ENCODE measurements at regions of chr1 and their contacts with region 1.

Region 1: GRCh38 chr1:116570358-116571200 is at the start of gene CD58:
- DNase-seq: peak; percentile 88 to 93
- H3K4me3 ChIP-seq: peak within 1 kb of the TSS; percentile 79
- H3K4me1 ChIP-seq: peaks cover 9% of the 10 kb centered on the region
- H3K27me3 ChIP-seq: no peaks in the 10 kb centered on the region

Region 2: DNA sequence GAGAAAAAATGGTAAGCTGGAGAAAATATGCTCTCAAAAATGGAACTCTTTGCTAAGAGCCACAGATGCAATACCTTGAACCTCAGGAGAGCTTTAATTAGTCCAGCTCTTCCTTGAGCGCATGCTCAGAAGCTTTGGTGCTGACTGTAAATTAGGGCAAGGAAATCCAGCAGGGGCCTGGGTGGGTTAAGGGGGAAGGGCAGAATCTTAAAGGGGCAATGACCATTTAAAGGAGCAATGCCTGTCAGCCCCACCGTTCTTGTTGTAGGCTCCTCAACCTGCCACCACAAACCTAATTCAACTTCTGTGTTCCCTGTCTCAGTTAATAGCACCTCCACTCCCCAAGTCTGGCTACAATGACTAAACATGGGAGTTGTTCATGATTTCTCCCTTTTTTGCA is 601.1 kb before region 1 on chr1:
- in situ Hi-C with region 1: no loop called
- DNase-seq: peak; percentile 74 to 79
- H3K4me3 ChIP-seq: no peak overlapping the region
- H3K4me1 ChIP-seq: peaks cover 8% of the 10 kb centered on the region
- H3K27me3 ChIP-seq: no peaks in the 10 kb centered on the region

Region 3: DNA sequence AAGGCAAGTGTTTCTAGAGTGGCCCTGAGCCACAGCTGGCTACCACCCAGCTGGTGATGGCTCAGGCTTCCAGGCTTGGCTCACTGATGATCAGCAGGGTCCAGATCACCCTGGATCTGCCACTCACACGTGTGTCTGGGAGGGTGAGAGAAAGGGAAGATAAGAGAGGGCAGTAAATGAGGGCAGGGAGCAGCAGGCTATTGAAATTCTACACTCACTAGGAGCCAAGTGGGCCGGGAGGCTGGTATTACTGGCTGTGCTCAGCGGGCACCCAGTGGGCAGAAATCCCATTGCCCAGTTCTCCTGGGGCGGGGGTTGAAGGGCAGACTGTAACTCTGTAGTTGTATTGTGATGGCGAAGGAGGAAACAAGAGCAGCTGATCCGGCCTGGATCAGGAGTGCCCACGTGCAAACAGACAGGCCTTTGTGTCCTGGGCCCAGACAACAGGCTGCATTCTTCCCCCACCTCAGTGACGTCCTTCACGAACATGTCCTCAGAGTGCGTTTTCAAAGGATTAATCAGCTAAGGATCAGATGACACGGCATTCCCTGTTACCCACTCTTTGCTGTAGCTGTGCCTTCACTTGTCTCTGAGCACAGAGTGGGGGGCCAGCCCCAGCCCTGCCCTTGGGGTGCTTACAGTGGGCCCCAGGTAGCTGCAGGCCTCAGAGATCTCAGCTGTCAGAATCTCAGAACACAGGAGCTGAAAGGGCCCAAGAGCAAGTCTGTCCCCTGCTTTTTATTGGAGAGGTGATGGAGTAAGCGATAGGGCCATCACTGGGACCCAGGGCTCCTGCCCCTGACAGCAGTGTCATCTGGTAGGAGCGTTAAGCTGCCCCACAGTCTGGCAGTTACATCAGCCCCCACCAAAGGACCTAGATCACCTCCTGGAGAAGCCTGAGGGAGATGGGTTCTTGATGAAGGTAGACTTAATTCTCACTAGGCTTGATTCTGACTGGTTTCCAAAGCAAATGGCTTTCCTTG is 137.0 kb before region 1 on chr1:
- in situ Hi-C with region 1: no loop called
- DNase-seq: no peak
- H3K4me3 ChIP-seq: no peak overlapping the region
- H3K4me1 ChIP-seq: no peaks in the 10 kb centered on the region; the same call in 1 of the 2 replicates
- H3K27me3 ChIP-seq: 0 out of 2 replicates have a peak, but pooled peaks cover 4% of the 10 kb centered on the region

Region 4: DNA sequence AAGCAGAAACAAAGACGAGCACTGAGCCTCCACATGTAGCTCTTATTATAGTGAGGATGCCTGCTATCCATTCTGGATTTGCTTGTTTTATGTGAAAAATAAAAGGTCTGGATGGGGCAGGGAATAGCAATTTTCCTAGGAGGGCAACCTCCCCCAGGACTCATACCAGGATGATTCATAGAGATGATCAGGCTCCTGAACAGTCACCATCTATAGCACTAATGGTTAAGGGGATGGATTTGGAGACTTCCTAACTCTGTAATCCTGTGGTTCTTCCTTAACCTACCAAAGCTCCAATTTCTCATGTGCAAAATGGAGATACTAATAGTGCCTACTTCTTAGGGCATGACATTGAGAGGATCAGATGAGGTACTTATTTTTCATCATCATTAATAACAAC is 34.7 kb after region 1 on chr1:
- in situ Hi-C with region 1: no loop called
- DNase-seq: peak; percentile 14 to 15
- H3K4me3 ChIP-seq: no peak overlapping the region
- H3K4me1 ChIP-seq: peaks cover 4% of the 10 kb centered on the region
- H3K27me3 ChIP-seq: no peaks in the 10 kb centered on the region

Region 5: GRCh38 chr1:116679091-116679827 is 108.7 kb after region 1 on chr1:
- in situ Hi-C with region 1: loop called (anchors 10 kb)
- DNase-seq: no peak
- H3K4me3 ChIP-seq: no peak overlapping the region
- H3K4me1 ChIP-seq: no peaks in the 10 kb centered on the region
- H3K27me3 ChIP-seq: peaks cover 2% of the 10 kb centered on the region; the same call in 1 of the 2 replicates

Region 6: DNA sequence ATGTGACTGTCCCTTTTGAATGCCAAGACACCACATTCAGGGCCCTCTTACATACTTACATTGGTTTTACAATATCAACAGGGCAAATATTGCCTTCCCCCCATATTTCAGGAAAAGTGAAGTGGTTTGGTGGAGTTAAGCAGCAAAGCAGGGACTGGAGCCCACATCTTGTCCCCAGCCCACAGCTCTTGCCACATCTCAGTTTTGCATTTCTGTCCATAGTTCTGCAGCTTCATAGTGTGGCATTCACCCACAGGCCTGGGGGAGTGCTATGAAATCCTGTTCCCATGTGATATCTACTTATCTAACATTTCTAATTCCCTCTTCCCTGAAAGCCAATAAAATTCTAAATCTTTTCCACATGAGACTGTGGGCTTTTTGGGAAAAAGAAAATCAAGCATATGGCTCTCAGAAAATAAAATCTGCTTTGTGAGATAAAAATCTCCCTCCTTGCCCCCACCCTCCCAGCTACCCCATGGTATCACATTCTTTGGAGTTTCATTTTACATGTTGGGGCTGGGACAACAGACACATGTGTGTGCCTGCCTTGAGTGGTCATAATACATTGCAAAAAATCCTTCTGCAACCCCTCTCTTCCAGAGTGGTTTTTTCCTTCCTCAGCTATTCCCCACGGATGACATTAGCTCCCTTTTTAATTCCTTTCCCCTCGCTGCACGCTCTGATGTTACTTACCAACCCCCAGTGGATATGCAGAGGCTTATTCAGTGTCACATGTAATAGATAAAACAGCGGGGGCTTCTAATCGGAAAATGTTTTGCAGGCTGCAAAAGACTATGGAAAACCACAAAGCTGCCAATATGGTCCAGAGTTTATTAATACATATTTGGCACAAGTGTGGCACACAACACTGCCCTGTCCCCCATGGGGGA is 163.1 kb after region 1 on chr1:
- in situ Hi-C with region 1: no loop called
- DNase-seq: no peak
- H3K4me3 ChIP-seq: no peak overlapping the region
- H3K4me1 ChIP-seq: no peaks in the 10 kb centered on the region
- H3K27me3 ChIP-seq: no peaks in the 10 kb centered on the region

Region 7: GRCh38 chr1:117059678-117060440 is 489.3 kb after region 1 on chr1 and contains the start of gene TTF2:
- in situ Hi-C with region 1: loop called (anchors 25 kb)
- DNase-seq: peak; percentile 98 to 99
- H3K4me3 ChIP-seq: peak within 1 kb of the TSS; percentile 59
- H3K4me1 ChIP-seq: peaks cover 21% of the 10 kb centered on the region
- H3K27me3 ChIP-seq: no peaks in the 10 kb centered on the region